ENCODE measurements at regions of chr16 and their contacts with region 1.

Region 1: DNA sequence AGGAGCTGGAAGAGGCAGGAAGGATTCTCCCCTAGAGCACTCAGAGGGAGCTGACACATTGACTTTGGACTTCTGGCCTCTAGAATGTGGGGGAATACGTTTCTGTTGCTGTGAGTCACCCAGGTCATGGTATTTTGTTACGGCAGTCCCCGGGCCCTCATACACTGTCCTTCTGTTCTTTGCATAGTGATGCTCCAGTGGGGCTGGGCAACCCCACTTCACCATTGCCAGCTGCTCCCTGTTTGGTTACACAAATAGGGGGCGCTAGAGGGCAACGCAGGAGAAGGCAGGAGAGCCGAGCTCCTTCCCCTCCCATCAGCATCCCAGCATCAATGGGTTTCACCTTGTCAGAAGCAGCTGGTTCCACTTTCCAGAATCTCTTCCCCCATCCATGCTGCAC is 257.7 kb upstream of the FOXF1 start:
- DNase-seq: peak; percentile 45
- H3K4me3 ChIP-seq: no peak overlapping the region
- H3K27ac ChIP-seq: no peak overlapping the region
- H3K4me1 ChIP-seq: no peaks in the 10 kb centered on the region
- H3K27me3 ChIP-seq: peaks cover 5 to 17% of the 10 kb centered on the region in 2 experiments
- CTCF ChIP-seq: peak; percentile 58 to 77
- POLR2A ChIP-seq: no peak

Region 2: GRCh38 chr16:86044241-86044671 is 208.3 kb before region 1 on chr16:
- CTCF ChIA-PET with region 1: interaction called, 19 read pairs
- POLR2A ChIA-PET with region 1: no interaction called
- dilution Hi-C with region 1: no loop called
- intact Hi-C with region 1: no loop called
- DNase-seq: peak; percentile 36
- H3K4me3 ChIP-seq: no peak overlapping the region
- H3K27ac ChIP-seq: no peak overlapping the region
- H3K4me1 ChIP-seq: no peaks in the 10 kb centered on the region
- H3K27me3 ChIP-seq: peaks cover 5 to 20% of the 10 kb centered on the region in 2 experiments
- CTCF ChIP-seq: peak; percentile 69 to 91
- POLR2A ChIP-seq: no peak

Region 3: DNA sequence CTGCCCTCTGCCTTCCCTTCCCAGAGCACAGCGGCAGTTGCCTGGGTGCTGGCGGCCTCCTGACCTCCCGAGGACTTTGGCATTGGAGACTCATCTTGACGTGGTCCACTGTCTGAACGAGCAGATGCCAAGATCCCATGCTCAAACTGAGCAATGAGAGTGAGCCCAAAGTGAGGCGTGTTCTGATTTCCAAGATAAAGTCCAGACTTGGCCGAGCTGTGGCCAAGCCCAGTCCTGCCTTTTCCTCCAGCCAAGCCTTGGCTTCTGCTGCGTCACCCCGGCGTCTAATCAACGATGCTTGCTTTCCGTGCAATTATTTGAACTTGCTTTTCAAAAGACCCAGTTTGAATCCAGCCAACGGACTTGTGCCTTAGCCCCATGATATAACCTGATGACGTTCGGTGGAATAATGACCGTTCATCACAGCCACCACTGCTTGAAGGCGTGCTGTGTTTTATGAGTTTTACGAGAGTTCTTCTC is 174.4 kb before region 1 on chr16:
- CTCF ChIA-PET with region 1: interaction called, 32 read pairs
- POLR2A ChIA-PET with region 1: no interaction called
- dilution Hi-C with region 1: no loop called
- intact Hi-C with region 1: loop called (anchors 1 kb)
- DNase-seq: no peak
- H3K4me3 ChIP-seq: no peak overlapping the region
- H3K27ac ChIP-seq: no peak overlapping the region
- H3K4me1 ChIP-seq: peaks cover 9% of the 10 kb centered on the region
- H3K27me3 ChIP-seq: no peaks in the 10 kb centered on the region
- CTCF ChIP-seq: no peak
- POLR2A ChIP-seq: no peak

Region 4: GRCh38 chr16:86343027-86343787 is 90.6 kb after region 1 on chr16:
- CTCF ChIA-PET with region 1: interaction called, 7 read pairs
- POLR2A ChIA-PET with region 1: no interaction called
- dilution Hi-C with region 1: no loop called
- intact Hi-C with region 1: loop called (anchors 5 kb)
- DNase-seq: peak; percentile 83
- H3K4me3 ChIP-seq: no peak overlapping the region
- H3K27ac ChIP-seq: peak overlapping the region; percentile 88
- H3K4me1 ChIP-seq: peaks cover 43% of the 10 kb centered on the region
- H3K27me3 ChIP-seq: no peaks in the 10 kb centered on the region
- CTCF ChIP-seq: no peak
- POLR2A ChIP-seq: no peak

Region 5: DNA sequence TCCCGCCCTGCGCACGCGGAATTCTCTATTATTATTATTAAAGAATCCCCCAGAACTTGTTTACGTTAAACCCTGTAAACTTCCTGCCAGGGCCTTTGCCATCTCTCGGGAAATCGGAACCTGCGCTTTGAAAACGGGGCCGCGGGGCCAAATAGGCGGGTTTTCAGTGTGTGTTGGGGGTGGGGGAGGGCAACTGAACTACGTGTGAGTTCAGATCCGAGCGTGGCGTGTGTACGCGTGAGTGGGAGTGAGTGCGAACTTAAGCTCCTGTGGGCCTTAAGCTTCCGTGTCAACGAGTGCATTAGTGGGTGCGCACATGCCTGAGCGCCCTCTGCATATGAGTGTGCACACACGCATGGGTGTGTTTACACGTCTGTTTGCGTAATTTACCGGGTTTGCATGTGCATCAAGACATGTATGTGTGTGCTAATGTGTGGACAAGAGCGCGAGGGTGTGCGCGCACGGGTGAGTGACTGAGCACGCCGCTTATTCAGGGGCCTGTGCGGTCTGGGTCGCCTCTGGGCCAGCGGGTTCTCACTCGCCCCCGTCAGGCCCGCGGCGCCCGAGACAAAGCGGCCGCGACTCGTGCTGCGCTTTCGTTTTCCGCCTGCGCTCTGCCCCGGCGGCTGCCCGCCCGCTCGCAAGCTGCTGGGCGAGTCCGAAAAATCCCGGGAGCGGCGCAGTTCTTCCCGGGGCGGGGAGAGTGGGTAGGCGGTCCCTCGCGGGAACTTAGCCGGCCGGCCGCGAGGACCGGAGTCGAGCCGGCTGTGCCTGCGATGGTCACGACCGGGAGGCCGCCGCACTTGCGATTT is 256.6 kb after region 1 on chr16:
- CTCF ChIA-PET with region 1: interaction called, 31 read pairs
- POLR2A ChIA-PET with region 1: no interaction called
- dilution Hi-C with region 1: no loop called
- intact Hi-C with region 1: no loop called
- DNase-seq: peak; percentile 70
- H3K4me3 ChIP-seq: peak overlapping the region; percentile 10 to 48 (median 15)
- H3K27ac ChIP-seq: no peak overlapping the region
- H3K4me1 ChIP-seq: no peaks in the 10 kb centered on the region
- H3K27me3 ChIP-seq: peaks cover 48 to 78% of the 10 kb centered on the region in 2 experiments
- CTCF ChIP-seq: no peak
- POLR2A ChIP-seq: no peak

Measured in endothelial cell of umbilical vein (primary cell).